ENCODE measurements at regions of chr5 and their contacts with region 1.

Region 1: GRCh38 chr5:132839426-132840301 is 9.2 kb upstream of the SHROOM1 start:
- DNase-seq: peak; percentile 73
- H3K4me3 ChIP-seq: no peak overlapping the region
- H3K27ac ChIP-seq: no peak overlapping the region
- H3K4me1 ChIP-seq: peaks cover 23% of the 10 kb centered on the region
- H3K27me3 ChIP-seq: no peaks in the 10 kb centered on the region
- CTCF ChIP-seq: no peak

Region 2: DNA sequence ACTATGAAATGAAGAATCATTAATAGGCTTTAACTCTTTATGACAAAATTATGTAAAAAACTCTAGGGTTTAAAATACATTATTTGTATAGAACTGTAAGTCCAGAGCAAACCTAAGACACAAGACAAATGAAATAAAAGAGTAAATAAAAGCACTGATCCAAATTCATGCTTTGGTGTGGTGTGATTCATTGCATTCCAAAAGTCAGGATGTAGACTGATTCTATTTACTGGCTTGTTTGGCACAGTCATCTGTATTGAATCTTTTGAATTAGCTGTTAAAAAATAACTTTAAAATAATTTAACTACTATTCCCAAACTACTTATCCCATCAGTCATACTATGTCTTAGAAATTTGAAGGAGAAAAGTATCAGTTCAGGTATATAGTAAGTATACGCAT is 134.8 kb before region 1 on chr5:
- CTCF ChIA-PET with region 1: no interaction called
- dilution Hi-C with region 1: no loop called
- in situ Hi-C with region 1: no loop called
- intact Hi-C with region 1: no loop called
- DNase-seq: peak; percentile 11
- H3K4me3 ChIP-seq: no peak overlapping the region
- H3K27ac ChIP-seq: no peak overlapping the region
- H3K4me1 ChIP-seq: no peaks in the 10 kb centered on the region
- H3K27me3 ChIP-seq: no peaks in the 10 kb centered on the region
- CTCF ChIP-seq: no peak

Region 3: GRCh38 chr5:132782101-132782500 is 57.6 kb before region 1 on chr5:
- CTCF ChIA-PET with region 1: no interaction called
- dilution Hi-C with region 1: no loop called
- in situ Hi-C with region 1: no loop called
- intact Hi-C with region 1: no loop called
- DNase-seq: peak; percentile 20
- H3K4me3 ChIP-seq: no peak overlapping the region
- H3K27ac ChIP-seq: no peak overlapping the region
- H3K4me1 ChIP-seq: peaks cover 18% of the 10 kb centered on the region
- H3K27me3 ChIP-seq: no peaks in the 10 kb centered on the region
- CTCF ChIP-seq: no peak

Region 4: DNA sequence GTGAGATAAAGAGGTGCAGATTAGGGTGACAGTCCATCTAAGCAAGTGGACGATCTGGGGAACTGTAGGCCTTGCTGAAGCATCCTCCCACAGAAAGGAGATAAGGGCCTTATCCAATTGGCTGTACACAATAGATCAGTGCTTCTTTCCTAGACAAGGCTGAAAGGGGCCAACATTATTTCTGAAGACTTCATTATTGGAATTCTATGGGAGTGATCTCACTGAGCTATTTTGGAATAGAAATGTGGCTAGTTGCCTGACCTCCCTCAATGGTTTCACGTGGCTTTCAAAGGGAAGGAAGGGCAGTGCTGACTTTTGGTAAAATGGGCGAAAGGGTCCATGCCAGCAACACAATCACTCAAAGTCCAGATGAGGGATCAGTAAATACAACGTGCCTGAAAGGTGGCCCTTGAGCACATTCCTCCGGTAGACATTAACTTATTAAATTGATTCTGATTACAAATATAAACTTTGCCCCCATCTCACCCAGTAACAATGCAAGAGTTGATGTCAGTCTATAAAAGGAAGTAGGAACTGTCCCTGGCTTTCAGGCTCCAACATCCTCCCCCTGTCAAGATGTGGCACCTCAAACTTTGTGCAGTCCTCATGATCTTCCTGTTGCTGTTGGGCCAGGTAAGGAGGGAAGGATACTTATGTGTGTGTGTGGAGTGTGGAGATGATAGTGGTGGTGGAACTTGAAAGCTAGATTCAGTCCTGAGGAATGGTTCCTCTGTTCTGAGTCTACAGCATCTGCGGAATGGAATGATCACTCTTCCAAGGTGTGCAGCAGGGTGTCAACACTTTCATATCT is 33.7 kb after region 1 on chr5 and contains the start of gene LEAP2:
- CTCF ChIA-PET with region 1: no interaction called
- dilution Hi-C with region 1: loop called (anchors 5 kb)
- in situ Hi-C with region 1: loop called in 1 of 2 experiments (anchors 5 kb)
- intact Hi-C with region 1: no loop called
- DNase-seq: no peak
- H3K4me3 ChIP-seq: no peak within 1 kb of the TSS
- H3K27ac ChIP-seq: no peak within 1 kb of the TSS
- H3K4me1 ChIP-seq: no peaks in the 10 kb centered on the region
- H3K27me3 ChIP-seq: no peaks in the 10 kb centered on the region
- CTCF ChIP-seq: no peak
- total RNA-seq, gene LEAP2: 0.17 to 0.80 TPM